Sigmoid colon (tissue), 7 donors: ENCODE measurements at regions of chr2 and their contacts with region 1.

Region 1: DNA sequence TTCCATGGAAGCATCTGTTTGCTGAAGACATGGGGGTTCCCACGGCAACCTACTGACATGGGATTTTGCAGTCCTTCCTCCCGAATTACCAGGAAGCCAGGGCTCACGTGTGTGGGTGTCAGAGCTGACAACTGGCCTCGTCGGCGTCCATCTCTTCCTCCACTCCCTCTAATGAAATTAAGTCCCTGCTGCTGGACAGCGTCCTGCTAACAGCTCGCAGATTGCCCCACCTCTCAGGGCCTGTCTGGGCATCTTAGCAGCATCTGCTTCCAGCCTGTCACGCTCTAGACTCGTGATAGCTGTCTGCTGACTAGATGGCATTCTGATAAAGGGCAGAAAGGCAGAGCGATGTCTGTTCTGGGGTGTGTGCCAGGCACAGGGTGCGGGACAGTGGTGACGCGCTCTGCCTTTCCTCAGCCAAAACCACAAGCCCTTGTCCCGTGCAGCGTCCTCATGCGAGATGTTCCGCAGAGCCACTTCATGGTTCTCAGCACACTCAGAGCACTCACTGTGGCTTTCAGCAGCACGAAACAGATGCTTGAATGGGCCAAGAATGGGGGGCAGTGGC is 161.1 kb downstream of the ARL4C start:
- DNase-seq: peak; percentile 95
- H3K4me3 ChIP-seq: no peak overlapping the region
- H3K27ac ChIP-seq: peak overlapping the region in 2 of 4 donors; percentile 8 to 50
- H3K4me1 ChIP-seq: peaks cover 0 to 28% (median 9%) of the 10 kb centered on the region in 4 donors
- H3K27me3 ChIP-seq: no peaks in the 10 kb centered on the region
- CTCF ChIP-seq: no peak
- EP300 ChIP-seq: peak; percentile 73 to 96 (median 96)
- POLR2A ChIP-seq: no peak

Region 2: DNA sequence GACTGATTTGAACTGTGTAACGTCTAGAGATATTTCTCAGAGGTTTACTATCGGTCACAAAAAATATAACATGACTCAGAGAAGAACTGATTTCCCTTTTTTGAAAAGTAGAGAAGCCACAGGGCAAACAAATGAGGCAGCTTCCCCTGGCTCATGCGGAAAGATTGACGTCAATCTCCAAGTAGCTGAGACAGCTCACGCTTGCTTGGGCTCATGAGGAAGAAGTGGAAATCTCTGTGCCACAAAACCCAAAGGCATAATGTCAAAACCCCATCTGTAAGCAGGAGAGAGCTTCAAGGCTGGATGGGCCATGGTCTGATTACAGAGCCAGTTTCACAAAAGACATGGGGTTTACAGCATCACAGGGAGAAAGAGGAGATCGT is 26.9 kb before region 1 on chr2:
- intact Hi-C with region 1: no loop called
- DNase-seq: no peak
- H3K4me3 ChIP-seq: no peak overlapping the region
- H3K27ac ChIP-seq: no peak overlapping the region
- H3K4me1 ChIP-seq: no peaks in the 10 kb centered on the region
- H3K27me3 ChIP-seq: no peaks in the 10 kb centered on the region
- CTCF ChIP-seq: no peak
- EP300 ChIP-seq: peak in 2 of 4 donors; percentile 55 to 73
- POLR2A ChIP-seq: no peak

Region 3: GRCh38 chr2:234368861-234369261 is 33.1 kb after region 1 on chr2:
- intact Hi-C with region 1: loop called (anchors 2 kb)
- DNase-seq: peak; percentile 92
- H3K4me3 ChIP-seq: no peak overlapping the region
- H3K27ac ChIP-seq: peak overlapping the region in 3 of 4 donors; percentile 55 to 80 (median 71)
- H3K4me1 ChIP-seq: peaks cover 0 to 42% (median 28%) of the 10 kb centered on the region in 4 donors
- H3K27me3 ChIP-seq: no peaks in the 10 kb centered on the region
- CTCF ChIP-seq: no peak
- EP300 ChIP-seq: peak; percentile 82 to 96 (median 88)
- POLR2A ChIP-seq: no peak